Pancreas (tissue), 10 donors: ENCODE measurements at regions of chr2 and their contacts with region 1.

Region 1: DNA sequence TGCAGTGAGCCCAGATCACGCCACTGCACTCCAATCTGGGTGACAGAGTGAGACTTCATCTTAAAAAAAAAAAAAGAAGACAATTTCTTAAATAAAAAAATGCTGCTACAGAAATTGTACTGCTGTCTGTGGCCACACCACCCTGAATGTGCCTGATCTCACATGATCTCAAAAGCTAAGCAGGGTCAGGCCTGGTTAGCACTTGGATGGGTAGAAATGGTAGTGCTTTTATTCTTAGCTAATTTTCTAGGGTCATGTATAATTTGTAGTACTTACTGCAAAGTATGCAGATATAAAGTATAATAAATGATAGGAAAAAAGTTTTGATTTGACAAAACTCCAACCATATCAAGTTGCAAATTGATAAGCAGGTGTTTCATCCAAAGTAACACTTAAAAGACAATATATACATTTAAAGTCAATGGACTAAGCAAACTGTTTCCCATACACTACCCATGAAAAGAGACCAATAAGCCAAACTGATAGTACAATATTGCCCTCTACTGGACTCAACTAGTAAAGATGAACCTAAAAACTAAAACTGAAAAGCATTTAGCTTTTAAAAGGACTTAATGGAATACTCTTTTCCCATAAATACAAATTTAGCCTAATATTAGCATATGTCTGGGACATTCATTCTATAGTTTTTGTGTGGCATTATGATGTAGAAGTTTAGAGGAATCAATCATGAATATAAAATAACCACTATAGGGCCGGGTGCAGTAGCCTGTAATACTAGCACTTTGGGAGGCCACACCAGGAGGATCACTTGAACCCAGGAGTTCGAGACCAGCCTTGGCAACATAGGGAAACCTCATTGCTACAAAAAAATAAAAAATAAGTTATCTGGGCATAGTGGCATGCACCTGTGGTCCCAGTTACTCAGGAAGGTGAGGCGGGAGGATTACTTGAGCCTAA is 18.6 kb upstream of the PEX13 start:
- DNase-seq: no peak
- ATAC-seq: peak in 3 of 4 donors; percentile 77 to 89 (median 86)
- H3K4me3 ChIP-seq: no peak overlapping the region
- H3K27ac ChIP-seq: no peak overlapping the region
- H3K4me1 ChIP-seq: no peaks in the 10 kb centered on the region
- H3K27me3 ChIP-seq: no peaks in the 10 kb centered on the region
- CTCF ChIP-seq: peak in 3 of 4 donors; percentile 32 to 43 (median 41)

Region 2: DNA sequence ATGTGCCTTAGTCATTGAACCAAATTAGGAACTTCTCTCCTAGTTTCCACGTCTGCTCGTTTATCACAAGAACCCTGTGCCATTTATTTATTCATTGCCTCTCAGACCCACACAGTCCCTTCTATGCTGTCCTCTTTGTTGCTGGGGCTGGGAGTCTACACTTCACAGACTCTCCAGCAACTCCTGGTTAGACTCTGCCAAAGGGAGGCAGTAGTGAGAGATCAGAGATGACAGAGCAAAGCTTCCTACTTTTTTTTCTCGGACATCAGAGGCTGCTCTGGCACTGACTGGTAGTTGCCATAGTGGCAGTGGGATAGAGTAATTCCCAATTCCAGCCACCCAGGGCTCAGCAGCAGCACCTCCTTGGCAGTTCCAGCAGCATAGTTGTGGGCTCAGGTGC is 722.9 kb before region 1 on chr2:
- intact Hi-C with region 1: no loop called
- DNase-seq: no peak
- ATAC-seq: no peak
- H3K4me3 ChIP-seq: no peak overlapping the region
- H3K27ac ChIP-seq: no peak overlapping the region
- H3K4me1 ChIP-seq: no peaks in the 10 kb centered on the region
- H3K27me3 ChIP-seq: no peaks in the 10 kb centered on the region
- CTCF ChIP-seq: no peak

Region 3: DNA sequence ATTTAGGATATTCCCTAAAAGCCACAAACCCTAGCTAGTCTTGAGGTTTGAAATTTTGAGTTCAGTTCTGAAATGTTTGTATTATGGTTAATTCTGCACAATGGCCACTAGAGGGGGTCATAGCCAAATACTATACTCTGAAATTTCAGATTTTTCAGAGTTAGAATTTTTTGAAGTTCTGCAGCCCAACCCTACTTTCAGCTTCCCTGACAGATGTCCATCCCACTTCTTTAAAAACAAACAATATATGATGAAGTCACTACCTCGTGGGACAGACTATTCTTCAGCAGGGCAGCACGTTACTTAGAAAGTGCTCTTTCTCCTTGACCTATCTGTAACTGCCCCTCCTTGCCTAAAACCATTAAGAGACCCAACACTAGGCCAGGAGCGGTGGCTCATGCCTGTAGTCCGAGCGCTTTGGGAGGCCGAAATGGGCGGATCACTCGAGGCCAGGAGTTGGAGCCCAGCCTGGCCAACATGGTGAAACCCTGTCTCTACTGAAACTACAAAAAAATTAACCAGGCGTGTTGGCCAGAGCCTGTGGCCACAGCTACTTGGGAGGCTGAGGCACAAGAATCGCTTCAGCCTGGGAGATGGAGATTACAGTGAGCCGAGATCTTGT is 291.0 kb before region 1 on chr2:
- intact Hi-C with region 1: loop called in 2 of 3 experiments (anchors 5 to 10 kb)
- DNase-seq: no peak
- ATAC-seq: peak; percentile 31 to 83 (median 77)
- H3K4me3 ChIP-seq: no peak overlapping the region
- H3K27ac ChIP-seq: no peak overlapping the region
- H3K4me1 ChIP-seq: no peaks in the 10 kb centered on the region
- H3K27me3 ChIP-seq: no peaks in the 10 kb centered on the region
- CTCF ChIP-seq: peak; percentile 13 to 80 (median 67)